ENCODE measurements at regions of chr1 and their contacts with region 1.

Region 1: GRCh38 chr1:167936068-167936929 is at the start of gene DCAF6:
- DNase-seq: peak; percentile 98
- H3K4me3 Mint-ChIP-seq: peak within 1 kb of the TSS; percentile 91
- H3K27ac Mint-ChIP-seq: peak within 1 kb of the TSS; percentile 97
- H3K4me1 Mint-ChIP-seq: peaks cover 26% of the 10 kb centered on the region
- H3K27me3 Mint-ChIP-seq: no peaks in the 10 kb centered on the region
- CTCF ChIP-seq: no peak
- total RNA-seq, gene DCAF6: 64.0 and 69.1 TPM in 2 replicates

Region 2: GRCh38 chr1:167715157-167715999 is 220.9 kb before region 1 on chr1:
- CTCF ChIA-PET with region 1: interaction called, 14 read pairs
- intact Hi-C with region 1: loop called (anchors 5 kb)
- DNase-seq: peak; percentile 88
- H3K4me3 Mint-ChIP-seq: peak overlapping the region; percentile 78
- H3K27ac Mint-ChIP-seq: peak overlapping the region; percentile 97
- H3K4me1 Mint-ChIP-seq: peaks cover 22% of the 10 kb centered on the region
- H3K27me3 Mint-ChIP-seq: no peaks in the 10 kb centered on the region
- CTCF ChIP-seq: peak; percentile 91

Region 3: DNA sequence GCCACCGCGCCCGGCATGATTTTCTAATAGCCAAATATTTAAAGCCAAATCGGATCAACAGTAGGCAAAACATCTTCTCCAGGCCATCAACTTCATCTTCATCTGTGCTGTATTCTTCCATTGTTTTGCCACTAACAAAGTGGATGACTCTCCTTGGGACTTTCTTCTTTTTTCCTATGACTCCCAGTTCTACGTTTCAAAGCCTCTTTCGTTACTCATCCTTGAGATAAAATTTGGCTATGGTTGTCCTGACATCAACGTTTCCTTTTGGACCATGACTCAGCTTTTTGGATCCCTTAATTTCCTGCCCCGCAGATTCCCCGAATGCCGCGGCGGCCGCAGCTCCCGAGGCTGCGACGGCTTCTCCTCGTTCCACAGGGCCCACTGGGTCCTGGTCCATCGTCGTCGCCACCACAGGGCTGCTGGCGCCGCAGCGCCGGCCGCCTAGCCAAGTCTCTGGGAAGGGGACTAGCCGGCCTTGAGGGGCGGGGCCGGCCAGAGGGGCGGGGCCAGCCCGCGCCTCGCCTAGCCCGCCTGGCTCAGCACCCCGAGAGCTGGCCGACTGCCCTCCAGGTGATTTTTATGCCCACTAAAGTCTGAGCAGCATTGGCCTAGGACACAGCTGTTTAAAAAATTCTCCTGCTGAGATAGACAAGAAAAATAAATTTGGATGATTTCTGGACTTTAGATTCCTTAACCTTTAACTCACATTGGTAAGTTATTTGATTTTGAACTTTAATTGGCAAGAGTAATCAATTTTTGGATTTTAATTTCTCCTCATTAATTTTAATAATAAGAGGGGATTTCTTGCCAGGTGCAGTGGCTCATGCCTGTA is 116.2 kb before region 1 on chr1:
- CTCF ChIA-PET with region 1: no interaction called
- intact Hi-C with region 1: no loop called
- DNase-seq: peak; percentile 85
- H3K4me3 Mint-ChIP-seq: peak overlapping the region; percentile 85
- H3K27ac Mint-ChIP-seq: peak overlapping the region; percentile 95
- H3K4me1 Mint-ChIP-seq: peaks cover 48% of the 10 kb centered on the region
- H3K27me3 Mint-ChIP-seq: no peaks in the 10 kb centered on the region
- CTCF ChIP-seq: no peak

Region 4: DNA sequence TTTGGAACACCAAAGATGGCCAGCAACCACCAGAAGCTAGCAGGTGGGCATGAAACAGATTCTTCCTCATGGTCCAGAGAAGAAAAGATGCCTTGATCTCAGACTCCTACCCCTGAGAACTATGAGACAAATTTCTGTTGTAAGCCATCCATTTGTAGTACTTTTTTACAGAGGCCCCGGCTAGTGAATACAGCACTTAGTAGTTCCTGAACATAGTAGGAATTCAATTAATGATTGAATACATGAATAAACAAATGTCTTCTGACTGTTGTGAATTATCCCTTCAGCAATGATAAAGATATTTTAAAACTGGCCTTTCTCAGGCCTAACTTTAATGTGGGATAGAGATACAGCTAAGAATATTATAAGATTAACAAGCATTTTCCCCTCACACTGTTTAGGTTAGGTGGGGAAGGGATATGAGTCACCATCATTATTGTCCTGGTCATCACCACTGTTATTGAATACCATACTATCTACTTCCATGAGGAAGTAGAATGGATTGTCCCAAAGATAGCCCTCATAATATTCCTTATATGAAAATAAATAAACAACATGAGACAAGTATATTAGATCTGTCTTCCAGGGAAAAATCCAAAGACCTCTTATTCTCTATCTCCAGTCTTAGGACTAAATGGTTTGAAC is 73.7 kb before region 1 on chr1:
- CTCF ChIA-PET with region 1: no interaction called
- intact Hi-C with region 1: no loop called
- DNase-seq: no peak
- H3K4me3 Mint-ChIP-seq: no peak overlapping the region
- H3K27ac Mint-ChIP-seq: no peak overlapping the region
- H3K4me1 Mint-ChIP-seq: no peaks in the 10 kb centered on the region
- H3K27me3 Mint-ChIP-seq: no peaks in the 10 kb centered on the region
- CTCF ChIP-seq: no peak